Ascending aorta (tissue), 2 donors: ENCODE measurements at regions of chr18 and their contacts with region 1.

Region 1: GRCh38 chr18:29248805-29249204 is 1071.9 kb upstream of the CDH2 start:
- DNase-seq: no peak
- H3K4me3 ChIP-seq: no peak overlapping the region
- H3K27ac ChIP-seq: no peak overlapping the region
- H3K4me1 ChIP-seq: no peaks in the 10 kb centered on the region
- H3K27me3 ChIP-seq: no peaks in the 10 kb centered on the region
- CTCF ChIP-seq: no peak

Region 2: DNA sequence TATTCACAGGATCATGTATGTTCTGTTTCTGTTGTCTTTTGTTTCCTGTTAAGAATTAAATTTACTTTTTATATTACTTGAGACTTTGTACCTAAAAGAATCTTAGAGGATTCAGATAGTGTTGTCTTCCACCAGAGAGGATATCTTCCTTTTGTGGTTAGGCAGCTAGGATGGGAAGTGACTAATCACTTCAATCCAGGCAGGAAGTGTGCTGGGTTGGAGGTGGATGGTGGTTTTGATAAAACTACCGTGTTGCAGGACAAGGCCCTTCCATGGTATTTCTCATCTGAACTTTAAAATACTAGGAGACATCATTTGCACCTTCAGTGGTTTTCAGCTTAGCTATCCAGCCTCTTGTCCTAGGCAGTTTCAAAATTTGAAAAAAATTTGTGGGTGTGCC is 343.3 kb before region 1 on chr18:
- intact Hi-C with region 1: no loop called
- DNase-seq: no peak
- H3K4me3 ChIP-seq: no peak overlapping the region
- H3K27ac ChIP-seq: no peak overlapping the region
- H3K4me1 ChIP-seq: no peaks in the 10 kb centered on the region
- H3K27me3 ChIP-seq: no peaks in the 10 kb centered on the region
- CTCF ChIP-seq: no peak

Region 3: DNA sequence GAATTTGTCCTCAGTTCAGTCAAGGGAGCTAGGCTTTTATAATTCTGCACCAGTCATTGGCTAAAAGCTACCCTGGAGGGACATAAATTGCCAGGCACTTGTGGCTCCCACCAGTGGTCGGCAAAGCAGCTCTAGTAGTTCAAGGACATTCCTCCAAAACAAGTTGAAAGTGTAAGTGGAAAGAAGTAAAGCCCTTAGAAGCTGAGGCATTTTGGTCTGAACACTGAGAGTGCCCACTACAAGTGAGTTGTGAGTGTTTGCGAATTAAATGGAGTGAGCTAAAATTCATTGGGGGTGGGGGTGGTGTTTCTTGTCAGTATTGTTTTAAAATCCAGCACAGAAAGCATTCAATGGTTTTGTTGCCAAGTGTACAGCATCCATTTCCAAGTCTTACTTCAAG is 192.0 kb before region 1 on chr18:
- intact Hi-C with region 1: loop called (anchors 10 kb)
- DNase-seq: no peak
- H3K4me3 ChIP-seq: no peak overlapping the region
- H3K27ac ChIP-seq: no peak overlapping the region
- H3K4me1 ChIP-seq: no peaks in the 10 kb centered on the region
- H3K27me3 ChIP-seq: no peaks in the 10 kb centered on the region
- CTCF ChIP-seq: no peak

Region 4: DNA sequence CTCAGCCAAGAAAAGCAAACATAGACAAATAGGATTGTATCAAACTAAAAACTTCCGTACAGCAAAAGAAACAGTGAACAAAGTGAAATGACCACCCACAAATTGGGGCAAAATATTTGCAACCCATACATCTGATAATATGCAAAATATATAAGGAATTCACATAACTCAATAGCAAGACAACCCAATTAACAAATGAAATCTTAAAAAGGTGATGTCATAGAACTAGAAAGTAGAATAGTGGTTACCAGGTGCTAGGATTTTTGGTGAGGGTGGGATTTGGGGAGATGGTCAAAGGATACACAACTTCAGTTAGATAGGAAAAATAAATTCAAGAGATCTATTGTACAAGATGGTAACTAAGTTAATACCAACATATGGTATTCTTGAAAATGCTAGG is 40.1 kb after region 1 on chr18:
- intact Hi-C with region 1: no loop called
- DNase-seq: no peak
- H3K4me3 ChIP-seq: no peak overlapping the region
- H3K27ac ChIP-seq: no peak overlapping the region
- H3K4me1 ChIP-seq: no peaks in the 10 kb centered on the region
- H3K27me3 ChIP-seq: no peaks in the 10 kb centered on the region
- CTCF ChIP-seq: no peak